ENCODE measurements at regions of chr13 and their contacts with region 1.

Region 1: DNA sequence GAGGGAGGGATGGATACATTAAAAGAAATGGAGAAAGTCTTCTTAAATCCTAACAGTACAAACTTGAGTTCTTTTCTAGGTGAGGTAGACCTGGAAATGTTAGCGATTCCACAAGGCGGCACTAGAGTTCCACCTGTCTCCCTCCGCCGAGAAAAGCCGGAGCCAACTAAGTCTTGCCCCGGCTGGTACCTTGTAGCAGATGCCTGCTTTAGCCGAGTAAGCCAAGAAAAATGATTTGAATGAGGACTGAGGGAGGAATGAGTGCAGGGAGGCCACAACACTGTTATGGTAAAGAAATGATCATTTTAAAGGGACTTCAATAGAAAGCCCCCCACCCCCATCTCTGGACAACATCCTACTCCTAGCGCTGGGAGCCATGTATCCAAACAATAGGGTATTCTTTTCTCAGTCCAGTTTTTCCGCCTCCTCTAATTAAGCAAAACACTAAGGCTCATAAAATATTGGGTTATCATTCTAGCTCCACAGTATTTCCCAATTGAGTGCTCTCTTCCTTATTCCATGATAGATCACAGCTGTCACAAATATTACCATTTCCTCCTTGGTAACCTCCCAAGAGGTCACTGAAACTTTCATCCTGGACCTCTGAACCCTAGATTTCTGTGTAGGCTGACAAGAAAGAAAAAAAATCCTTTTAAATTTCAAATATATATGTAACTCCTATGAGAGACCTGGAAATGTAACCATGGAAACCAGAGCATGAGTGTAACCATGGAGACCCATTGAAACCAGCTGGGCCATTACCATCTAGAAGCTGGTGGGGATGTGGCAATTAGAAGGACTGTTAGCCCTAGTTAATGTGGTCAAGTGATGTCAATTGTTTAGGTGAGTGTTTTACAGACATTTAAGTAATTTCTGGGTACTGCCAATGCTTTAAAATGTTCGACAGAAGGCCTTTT is 58.3 kb downstream of the GPALPP1 start:
- DNase-seq: peak; percentile 92
- H3K4me3 ChIP-seq: peak overlapping the region; percentile 82
- H3K27ac ChIP-seq: peak overlapping the region; percentile 18; the same call in 1 of the 2 replicates
- H3K4me1 ChIP-seq: peaks cover 8% of the 10 kb centered on the region; the same call in 1 of the 2 replicates
- H3K27me3 ChIP-seq: no peaks in the 10 kb centered on the region

Region 2: DNA sequence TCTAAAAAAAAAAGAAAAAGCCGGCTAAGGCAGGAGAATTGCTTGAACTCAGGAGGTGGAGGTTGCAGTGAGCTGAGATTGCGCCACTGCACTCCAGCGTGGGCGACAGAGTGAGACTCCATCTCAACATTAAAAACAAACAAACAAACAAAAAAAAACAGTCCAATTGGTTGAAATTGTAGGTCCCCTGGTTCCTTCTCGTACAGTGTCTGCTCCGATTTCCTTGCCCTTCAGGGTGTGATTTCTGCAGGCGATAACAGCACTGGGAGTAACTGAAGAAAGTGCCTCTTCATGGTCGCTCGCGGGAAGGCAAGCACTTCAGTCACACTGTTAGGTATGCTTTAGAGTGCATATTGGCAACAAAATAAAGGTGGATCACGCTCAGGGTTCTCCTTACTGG is 253.6 kb after region 1 on chr13:
- in situ Hi-C with region 1: loop called (anchors 10 kb)
- DNase-seq: no peak
- H3K4me3 ChIP-seq: no peak overlapping the region
- H3K27ac ChIP-seq: no peak overlapping the region
- H3K4me1 ChIP-seq: no peaks in the 10 kb centered on the region
- H3K27me3 ChIP-seq: no peaks in the 10 kb centered on the region

Region 3: GRCh38 chr13:45473627-45474026 is 426.0 kb after region 1 on chr13:
- in situ Hi-C with region 1: no loop called
- DNase-seq: peak; percentile 4
- H3K4me3 ChIP-seq: no peak overlapping the region
- H3K27ac ChIP-seq: no peak overlapping the region
- H3K4me1 ChIP-seq: peaks cover 6% of the 10 kb centered on the region; the same call in 1 of the 2 replicates
- H3K27me3 ChIP-seq: no peaks in the 10 kb centered on the region